GM12878 (cell line): ENCODE measurements at regions of chr2 and their contacts with region 1.

Region 1: GRCh38 chr2:43542285-43542937 is 53.4 kb downstream of the THADA start:
- DNase-seq: no peak
- ATAC-seq: peak; percentile 76
- H3K4me3 ChIP-seq: no peak overlapping the region
- H3K27ac ChIP-seq: no peak overlapping the region
- H3K4me1 ChIP-seq: no peaks in the 10 kb centered on the region
- H3K27me3 ChIP-seq: no peaks in the 10 kb centered on the region
- CTCF ChIP-seq: peak; percentile 36 to 58 (median 45); a peak in 3 of 6 replicates
- EP300 ChIP-seq: no peak
- POLR2A ChIP-seq: no peak
- RAD21 ChIP-seq: peak; percentile 61

Region 2: GRCh38 chr2:42828487-42829425 is 713.7 kb before region 1 on chr2:
- CTCF ChIA-PET with region 1: interaction called, 12 read pairs
- POLR2A ChIA-PET with region 1: no interaction called
- RAD21 ChIA-PET with region 1: interaction called, 3 read pairs
- SMC1A ChIA-PET with region 1: interaction called, 4 read pairs
- in situ Hi-C with region 1: no loop called
- intact Hi-C with region 1: loop called (anchors 1 kb)
- DNase-seq: peak; percentile 15
- ATAC-seq: peak; percentile 97
- H3K4me3 ChIP-seq: no peak overlapping the region
- H3K27ac ChIP-seq: no peak overlapping the region
- H3K4me1 ChIP-seq: no peaks in the 10 kb centered on the region
- H3K27me3 ChIP-seq: no peaks in the 10 kb centered on the region; a peak in 1 of 4 replicates
- CTCF ChIP-seq: peak; percentile 92 to 98 (median 93)
- EP300 ChIP-seq: no peak
- POLR2A ChIP-seq: no peak
- RAD21 ChIP-seq: peak; percentile 82

Region 3: DNA sequence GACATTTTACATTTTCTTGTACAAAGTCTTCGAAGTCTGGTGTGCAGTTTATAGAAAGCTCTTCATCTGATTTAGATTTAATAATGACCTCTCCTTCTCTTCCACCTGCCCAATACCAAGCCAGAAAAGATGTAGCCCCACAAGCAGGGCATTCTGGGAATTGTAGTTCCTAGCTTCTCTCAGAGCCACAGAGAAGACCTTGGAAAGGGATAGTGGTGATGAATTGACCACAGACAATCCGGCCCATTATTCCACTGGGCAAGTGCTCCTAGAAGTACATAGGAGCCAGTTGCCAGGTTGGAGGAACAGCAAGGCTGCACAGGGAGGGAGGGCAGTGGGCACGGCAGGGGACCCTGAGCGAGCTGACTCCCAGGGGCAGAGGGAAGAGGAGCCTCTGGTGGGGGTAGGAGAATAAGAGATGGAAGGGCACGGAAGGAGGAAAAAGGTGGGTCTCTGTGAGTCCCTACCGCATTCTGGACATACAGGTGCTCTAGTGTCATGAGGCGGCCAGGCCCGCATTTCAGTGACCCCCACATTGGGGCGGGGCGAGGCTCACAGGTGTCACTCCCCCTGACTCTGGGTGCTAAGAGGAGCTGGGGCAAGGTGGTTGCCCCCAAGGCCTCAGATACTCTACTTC is 597.5 kb before region 1 on chr2:
- CTCF ChIA-PET with region 1: interaction called, 12 read pairs
- POLR2A ChIA-PET with region 1: no interaction called
- RAD21 ChIA-PET with region 1: interaction called, 5 read pairs
- SMC1A ChIA-PET with region 1: interaction called, 23 read pairs
- in situ Hi-C with region 1: no loop called
- intact Hi-C with region 1: loop called (anchors 2 kb)
- DNase-seq: no peak
- ATAC-seq: peak; percentile 39; the same call in 2 of the 3 replicates
- H3K4me3 ChIP-seq: no peak overlapping the region
- H3K27ac ChIP-seq: no peak overlapping the region
- H3K4me1 ChIP-seq: no peaks in the 10 kb centered on the region
- H3K27me3 ChIP-seq: no peaks in the 10 kb centered on the region
- CTCF ChIP-seq: no peak
- EP300 ChIP-seq: no peak
- POLR2A ChIP-seq: no peak
- RAD21 ChIP-seq: no peak

Region 4: DNA sequence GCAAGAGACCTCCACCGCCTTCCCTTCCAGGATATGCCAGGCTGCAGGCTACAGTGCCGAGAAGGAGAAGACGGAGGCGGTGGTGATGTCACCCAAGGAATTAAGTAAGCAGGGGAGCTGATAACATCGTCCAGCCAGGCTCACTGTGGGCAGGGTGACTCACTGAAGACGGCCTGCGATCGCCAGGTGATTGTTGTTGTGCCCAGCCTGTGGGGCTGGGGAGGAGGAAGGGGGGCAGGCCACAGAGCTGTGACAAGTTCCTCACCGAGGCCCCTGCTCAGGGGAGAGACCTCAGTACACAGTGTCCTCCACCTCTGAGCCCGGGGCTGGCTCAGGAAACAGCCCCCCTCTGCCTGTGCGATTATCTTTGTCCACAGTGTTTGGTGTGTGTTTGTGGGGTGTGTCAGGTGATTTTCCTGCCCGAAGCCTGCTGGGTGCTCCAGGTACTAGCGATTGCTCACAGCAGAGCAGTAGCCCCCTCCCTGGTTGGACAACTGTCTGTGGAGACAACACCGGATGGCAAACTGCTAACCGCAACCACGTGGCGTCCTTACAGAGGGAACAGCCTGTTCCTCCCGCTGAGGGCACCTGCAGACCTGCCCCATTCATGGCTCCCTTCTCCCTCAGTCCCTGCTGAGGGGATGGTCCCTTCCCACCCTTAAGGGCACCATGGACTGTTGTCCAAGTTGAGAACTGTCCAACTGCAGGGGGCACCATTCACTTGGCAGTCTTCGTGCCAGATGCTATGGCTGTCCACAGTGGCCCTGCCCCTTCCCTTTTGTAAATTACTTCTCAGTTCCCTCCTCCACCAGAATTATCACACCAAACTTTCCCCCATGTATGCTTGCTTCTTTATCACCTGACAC is 411.2 kb before region 1 on chr2:
- CTCF ChIA-PET with region 1: interaction called, 6 read pairs
- POLR2A ChIA-PET with region 1: no interaction called
- RAD21 ChIA-PET with region 1: interaction called, 5 read pairs
- SMC1A ChIA-PET with region 1: interaction called, 6 read pairs
- in situ Hi-C with region 1: no loop called
- intact Hi-C with region 1: loop called (anchors 2 kb)
- DNase-seq: no peak
- ATAC-seq: peak; percentile 81
- H3K4me3 ChIP-seq: no peak overlapping the region
- H3K27ac ChIP-seq: no peak overlapping the region
- H3K4me1 ChIP-seq: peaks cover 43% of the 10 kb centered on the region
- H3K27me3 ChIP-seq: no peaks in the 10 kb centered on the region
- CTCF ChIP-seq: peak; percentile 61 to 82 (median 62); a peak in 5 of 6 replicates
- EP300 ChIP-seq: no peak; a peak in 1 of 4 replicates
- POLR2A ChIP-seq: no peak
- RAD21 ChIP-seq: peak; percentile 78

Region 5: GRCh38 chr2:43464590-43464989 is 77.8 kb before region 1 on chr2:
- CTCF ChIA-PET with region 1: no interaction called
- POLR2A ChIA-PET with region 1: no interaction called
- RAD21 ChIA-PET with region 1: no interaction called
- SMC1A ChIA-PET with region 1: no interaction called
- in situ Hi-C with region 1: no loop called
- intact Hi-C with region 1: no loop called
- DNase-seq: no peak
- ATAC-seq: no peak
- H3K4me3 ChIP-seq: no peak overlapping the region
- H3K27ac ChIP-seq: no peak overlapping the region
- H3K4me1 ChIP-seq: peaks cover 29% of the 10 kb centered on the region
- H3K27me3 ChIP-seq: no peaks in the 10 kb centered on the region
- CTCF ChIP-seq: no peak
- EP300 ChIP-seq: no peak
- POLR2A ChIP-seq: no peak
- RAD21 ChIP-seq: no peak

Region 6: DNA sequence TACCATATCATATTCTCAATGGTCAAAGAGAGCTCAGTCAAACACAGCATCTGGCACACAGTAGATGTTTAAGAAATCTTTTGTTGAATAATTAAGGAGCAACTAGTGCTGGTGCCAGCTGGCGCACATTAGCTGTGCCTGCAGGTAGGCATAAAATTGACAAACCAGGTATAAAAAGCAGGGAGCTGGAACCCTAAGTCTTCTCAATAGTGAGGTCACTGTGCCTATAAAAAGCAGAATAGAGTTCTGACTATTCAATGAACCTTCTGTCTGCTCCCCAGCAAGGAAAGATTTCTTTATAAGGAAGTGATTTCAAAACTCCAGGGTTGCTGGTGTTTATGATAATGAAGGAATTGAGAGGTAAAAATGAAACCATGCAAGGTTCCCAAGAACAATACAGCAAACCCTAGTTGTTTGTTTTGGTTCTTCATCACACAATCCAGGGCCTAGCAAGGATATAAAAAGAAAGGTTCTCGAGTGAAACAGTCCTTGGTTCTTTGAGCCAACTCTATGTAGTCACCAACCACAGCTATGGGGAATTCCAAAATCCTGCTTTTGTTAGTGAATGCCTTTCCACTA is 22.7 kb before region 1 on chr2:
- CTCF ChIA-PET with region 1: interaction called, 14 read pairs
- POLR2A ChIA-PET with region 1: interaction called, 3 read pairs
- RAD21 ChIA-PET with region 1: interaction called, 9 read pairs
- SMC1A ChIA-PET with region 1: interaction called, 6 read pairs
- in situ Hi-C with region 1: no loop called
- intact Hi-C with region 1: no loop called
- DNase-seq: no peak
- ATAC-seq: peak; percentile 71
- H3K4me3 ChIP-seq: no peak overlapping the region
- H3K27ac ChIP-seq: peak overlapping the region; percentile 54
- H3K4me1 ChIP-seq: peaks cover 17% of the 10 kb centered on the region
- H3K27me3 ChIP-seq: no peaks in the 10 kb centered on the region
- CTCF ChIP-seq: no peak
- EP300 ChIP-seq: no peak
- POLR2A ChIP-seq: no peak
- RAD21 ChIP-seq: no peak

Region 7: DNA sequence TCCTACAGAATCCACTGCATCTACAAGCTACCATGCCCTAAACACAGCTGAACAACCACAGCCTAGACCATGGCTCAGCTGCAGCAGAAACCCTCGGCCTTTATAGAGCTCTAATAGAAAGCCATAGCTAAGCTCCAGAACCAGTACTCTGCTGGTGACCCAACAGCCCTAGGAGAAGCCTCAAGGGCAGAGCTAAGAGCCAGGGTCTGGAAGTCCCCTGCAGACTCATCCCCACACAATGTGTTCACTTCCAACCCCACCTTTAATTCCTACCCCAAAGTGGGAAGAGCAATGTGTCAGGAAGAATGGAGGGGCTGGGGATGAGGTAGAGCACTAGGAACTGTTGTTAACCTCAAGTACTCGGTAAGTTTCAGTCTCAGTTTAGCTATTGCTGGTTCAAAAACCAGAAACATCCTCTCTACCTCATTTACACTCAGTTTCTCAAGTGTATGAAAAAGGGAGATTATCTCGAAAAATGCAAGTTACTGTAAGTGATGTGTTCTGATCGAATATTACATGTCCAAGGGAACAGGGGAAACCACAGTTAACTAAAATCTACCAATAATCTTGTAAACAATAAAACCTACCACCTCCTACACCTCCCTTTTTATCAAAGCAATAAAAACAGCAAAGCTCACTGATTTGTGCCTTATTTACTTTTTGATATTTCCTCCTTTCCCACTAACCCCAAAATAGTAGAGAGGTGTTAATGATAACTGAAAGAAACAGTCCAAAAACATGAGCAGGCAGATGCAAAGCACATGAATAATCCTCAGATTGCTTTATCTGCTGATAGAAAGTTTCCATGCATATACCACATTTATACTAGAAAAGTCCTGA is 17.2 kb after region 1 on chr2:
- CTCF ChIA-PET with region 1: interaction called, 14 read pairs
- POLR2A ChIA-PET with region 1: no interaction called
- RAD21 ChIA-PET with region 1: interaction called, 6 read pairs
- SMC1A ChIA-PET with region 1: interaction called, 26 read pairs
- in situ Hi-C with region 1: no loop called
- intact Hi-C with region 1: no loop called
- DNase-seq: peak; percentile 45
- ATAC-seq: peak; percentile 95
- H3K4me3 ChIP-seq: peak overlapping the region; percentile 27; the same call in 1 of the 2 replicates
- H3K27ac ChIP-seq: peak overlapping the region; percentile 50
- H3K4me1 ChIP-seq: peaks cover 19% of the 10 kb centered on the region
- H3K27me3 ChIP-seq: no peaks in the 10 kb centered on the region
- CTCF ChIP-seq: no peak
- EP300 ChIP-seq: peak; percentile 32 to 38; a peak in 2 of 4 replicates
- POLR2A ChIP-seq: no peak
- RAD21 ChIP-seq: no peak

Region 8: DNA sequence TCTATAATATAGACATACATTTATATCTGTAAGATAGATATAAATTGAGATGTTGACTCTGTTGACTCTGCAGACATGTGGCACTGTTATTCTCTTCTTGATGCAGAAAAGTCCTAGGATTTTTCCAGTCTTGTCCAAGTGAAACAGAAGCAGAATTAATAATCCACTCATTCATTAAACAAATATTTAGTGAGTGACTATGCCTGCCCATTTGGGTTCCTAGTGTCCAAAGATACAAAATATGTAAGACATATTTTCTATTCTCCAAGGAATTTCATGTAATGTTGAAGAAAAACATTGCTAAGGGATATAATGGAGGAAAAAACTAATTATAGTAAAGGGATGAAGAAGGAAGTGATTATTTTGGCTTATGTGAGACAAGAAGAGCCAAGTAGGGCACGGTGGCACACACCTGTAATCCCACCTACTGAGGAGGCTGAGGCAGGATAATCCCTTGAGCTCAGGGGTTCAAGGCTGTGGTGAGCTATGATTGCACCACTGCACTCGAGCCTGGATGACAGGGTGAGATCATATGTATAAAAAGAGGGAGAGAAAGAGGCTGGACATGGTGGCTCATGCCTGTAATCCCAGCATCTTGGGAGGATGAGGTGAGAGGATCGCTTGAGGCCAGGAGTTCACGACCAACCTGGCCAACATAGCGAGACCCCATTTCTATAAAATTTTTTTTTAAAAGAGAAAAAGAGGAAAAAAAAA is 74.7 kb after region 1 on chr2:
- CTCF ChIA-PET with region 1: no interaction called
- POLR2A ChIA-PET with region 1: no interaction called
- RAD21 ChIA-PET with region 1: no interaction called
- SMC1A ChIA-PET with region 1: no interaction called
- in situ Hi-C with region 1: no loop called
- intact Hi-C with region 1: no loop called
- DNase-seq: no peak
- ATAC-seq: no peak
- H3K4me3 ChIP-seq: no peak overlapping the region
- H3K27ac ChIP-seq: no peak overlapping the region
- H3K4me1 ChIP-seq: no peaks in the 10 kb centered on the region
- H3K27me3 ChIP-seq: no peaks in the 10 kb centered on the region; a peak in 1 of 4 replicates
- CTCF ChIP-seq: no peak
- EP300 ChIP-seq: no peak
- POLR2A ChIP-seq: no peak
- RAD21 ChIP-seq: no peak

Region 9: DNA sequence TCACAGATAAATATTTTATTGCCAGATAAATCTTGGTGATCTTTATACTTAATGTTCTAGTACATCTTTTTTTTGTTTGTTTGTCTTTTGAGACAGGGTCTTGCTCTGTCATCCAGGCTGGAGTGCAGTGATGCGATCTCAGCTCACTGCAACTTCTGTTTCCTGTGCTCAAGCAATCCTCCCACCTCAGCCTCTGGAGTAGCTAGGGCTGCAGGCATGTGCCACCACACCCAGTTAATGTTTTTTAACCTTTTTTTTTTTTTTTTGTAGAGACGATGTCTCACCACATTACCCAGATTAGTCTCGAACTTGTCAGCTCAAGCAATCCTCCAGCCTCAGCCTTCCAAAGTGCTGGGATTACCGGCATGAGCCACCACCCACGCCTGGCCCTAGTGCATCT is 142.9 kb after region 1 on chr2:
- CTCF ChIA-PET with region 1: no interaction called
- POLR2A ChIA-PET with region 1: no interaction called
- RAD21 ChIA-PET with region 1: no interaction called
- SMC1A ChIA-PET with region 1: no interaction called
- in situ Hi-C with region 1: no loop called
- intact Hi-C with region 1: no loop called
- DNase-seq: no peak
- ATAC-seq: no peak
- H3K4me3 ChIP-seq: no peak overlapping the region
- H3K27ac ChIP-seq: no peak overlapping the region
- H3K4me1 ChIP-seq: no peaks in the 10 kb centered on the region
- H3K27me3 ChIP-seq: peaks cover 0 to 4% of the 10 kb centered on the region in 2 experiments; a peak in 1 of 4 replicates
- CTCF ChIP-seq: no peak
- EP300 ChIP-seq: no peak
- POLR2A ChIP-seq: no peak
- RAD21 ChIP-seq: no peak